ENCODE measurements at regions of chr12 and their contacts with region 1.

Region 1: GRCh38 chr12:94262228-94263010 is 114.0 kb downstream of the PLXNC1 start:
- DNase-seq: peak; percentile 68 to 93
- H3K4me3 ChIP-seq: peak overlapping the region; percentile 46 to 67
- H3K27ac ChIP-seq: peak overlapping the region; percentile 75 to 81
- H3K4me1 ChIP-seq: peaks cover 0 to 6% of the 10 kb centered on the region in 2 donors
- H3K27me3 ChIP-seq: no peaks in the 10 kb centered on the region
- CTCF ChIP-seq: no peak

Region 2: DNA sequence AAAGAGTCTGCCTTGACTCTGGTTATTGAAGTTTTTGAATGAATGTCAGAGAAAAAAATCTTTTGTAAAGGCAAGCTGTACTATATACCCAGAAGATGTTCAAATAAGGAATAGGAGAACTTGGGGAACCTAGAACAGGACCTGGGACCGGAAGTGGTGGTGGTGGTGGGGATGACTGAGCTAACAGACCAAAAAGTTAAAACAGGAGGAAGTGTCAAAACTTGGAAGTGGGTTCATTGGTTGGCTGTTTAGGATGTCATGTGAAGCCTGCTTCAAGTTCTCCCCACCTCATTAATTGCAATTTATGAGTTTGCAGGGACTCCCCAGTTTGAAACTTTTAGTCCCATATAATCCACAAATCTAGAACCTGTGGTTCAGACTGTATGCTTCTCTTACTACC is 87.8 kb before region 1 on chr12:
- intact Hi-C with region 1: no loop called
- DNase-seq: no peak
- H3K4me3 ChIP-seq: no peak overlapping the region
- H3K27ac ChIP-seq: no peak overlapping the region
- H3K4me1 ChIP-seq: no peaks in the 10 kb centered on the region
- H3K27me3 ChIP-seq: no peaks in the 10 kb centered on the region
- CTCF ChIP-seq: no peak

Region 3: DNA sequence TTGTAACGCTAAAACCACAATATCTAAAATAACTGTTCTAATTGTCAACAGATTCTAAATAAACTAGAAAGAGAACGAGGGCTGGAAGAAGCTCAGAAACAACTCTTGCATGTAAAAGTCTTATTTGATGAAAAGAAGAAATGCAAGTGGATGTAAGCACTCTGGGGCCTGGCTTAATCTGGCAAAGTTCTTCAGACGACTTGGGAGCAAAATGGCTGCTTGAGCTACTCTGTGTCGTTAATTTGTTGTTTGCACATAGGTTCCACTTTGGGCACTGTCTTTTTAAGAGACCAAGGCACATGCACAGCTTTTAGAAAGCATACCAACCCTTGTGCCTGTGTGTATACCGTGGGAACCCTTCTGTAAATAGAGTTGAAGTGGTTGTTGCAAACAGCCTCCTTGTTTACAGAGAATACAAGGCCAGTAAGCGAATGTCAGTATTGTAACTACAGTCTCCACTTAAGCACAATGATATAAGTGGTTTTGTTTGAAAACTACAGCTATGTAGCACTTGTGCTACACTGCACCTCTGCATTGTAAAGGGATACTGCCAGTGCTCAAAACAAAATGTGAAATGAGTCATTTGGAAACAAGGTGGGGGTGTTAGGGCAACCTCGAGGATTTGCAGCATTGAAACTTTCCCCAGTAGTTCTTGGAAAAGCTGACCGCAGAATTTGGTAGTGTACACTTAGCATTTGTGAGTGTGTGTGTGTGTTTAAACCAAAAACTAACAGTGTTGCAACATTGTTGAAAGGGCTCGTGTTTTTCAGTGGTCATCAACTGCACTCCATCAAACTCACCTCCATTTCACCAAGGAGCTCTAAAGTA is 42.9 kb after region 1 on chr12:
- intact Hi-C with region 1: loop called (anchors 5 kb)
- DNase-seq: no peak
- H3K4me3 ChIP-seq: no peak overlapping the region
- H3K27ac ChIP-seq: peak overlapping the region; percentile 55 to 63
- H3K4me1 ChIP-seq: peaks cover 5 to 17% of the 10 kb centered on the region in 2 donors
- H3K27me3 ChIP-seq: no peaks in the 10 kb centered on the region
- CTCF ChIP-seq: no peak

Region 4: GRCh38 chr12:94459728-94460615 is 197.6 kb after region 1 on chr12 and contains the start of gene CEP83:
- intact Hi-C with region 1: loop called (anchors 5 kb)
- DNase-seq: peak; percentile 87 to 97
- H3K4me3 ChIP-seq: peak within 1 kb of the TSS; percentile 74 to 97
- H3K27ac ChIP-seq: peak within 1 kb of the TSS; percentile 83 to 92
- H3K4me1 ChIP-seq: peaks cover 0 to 14% of the 10 kb centered on the region in 2 donors
- H3K27me3 ChIP-seq: no peaks in the 10 kb centered on the region
- CTCF ChIP-seq: no peak
- total RNA-seq, gene CEP83: 23.6 TPM

Measured in ascending aorta (tissue), 2 donors.